ENCODE measurements at regions of chr17 and their contacts with region 1.

Region 1: DNA sequence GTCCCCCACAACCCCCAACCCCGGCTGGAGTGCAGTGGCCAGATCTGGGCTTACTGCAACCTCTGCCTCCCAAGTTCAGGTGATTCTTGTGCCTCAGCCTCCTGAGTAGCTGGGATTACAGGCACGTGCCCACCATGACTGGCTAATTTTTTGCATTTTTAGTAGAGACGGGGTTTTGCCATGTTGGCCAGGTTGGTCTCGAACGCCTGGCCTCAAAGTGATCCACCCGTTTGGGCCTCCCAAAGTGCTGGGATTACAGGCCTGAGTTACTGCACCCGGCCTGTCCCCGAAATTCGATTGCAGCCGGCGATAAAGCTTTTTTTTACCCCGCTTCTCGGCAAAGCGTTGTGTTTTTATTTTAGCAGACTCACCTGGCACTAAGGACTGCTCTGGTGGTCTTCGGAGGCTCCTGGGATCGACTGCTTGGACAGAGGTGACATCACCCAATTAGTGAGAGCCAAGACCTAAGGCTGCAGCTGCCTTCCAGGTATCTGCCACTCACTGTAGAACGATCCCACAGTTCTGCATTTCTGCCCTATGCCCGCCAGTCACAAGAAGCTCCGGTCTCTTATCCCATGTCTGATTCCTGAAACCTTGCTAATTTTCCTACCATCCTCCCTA is 82.2 kb upstream of the ARL4D start:
- DNase-seq: peak in 3 of 5 donors; percentile 20 to 53 (median 20)
- H3K4me3 ChIP-seq: no peak overlapping the region
- H3K4me3 Mint-ChIP-seq: peak overlapping the region in 6 of 8 donors; percentile 5 to 62 (median 44)
- H3K27ac ChIP-seq: no peak overlapping the region
- H3K27ac Mint-ChIP-seq: peak overlapping the region in 2 of 7 donors; percentile 65 to 79
- H3K4me1 ChIP-seq: no peaks in the 10 kb centered on the region
- H3K4me1 Mint-ChIP-seq: peaks cover 5 to 17% (median 11%) of the 10 kb centered on the region in 4 donors
- H3K27me3 ChIP-seq: no peaks in the 10 kb centered on the region
- H3K27me3 Mint-ChIP-seq: no peaks in the 10 kb centered on the region

Region 2: GRCh38 chr17:42872251-42872965 is 444.2 kb before region 1 on chr17:
- CTCF ChIA-PET with region 1: no interaction called
- POLR2A ChIA-PET with region 1: no interaction called
- intact Hi-C with region 1: no loop called
- DNase-seq: no peak
- H3K4me3 ChIP-seq: no peak overlapping the region
- H3K4me3 Mint-ChIP-seq: no peak overlapping the region
- H3K27ac ChIP-seq: no peak overlapping the region
- H3K27ac Mint-ChIP-seq: no peak overlapping the region
- H3K4me1 ChIP-seq: no peaks in the 10 kb centered on the region
- H3K4me1 Mint-ChIP-seq: no peaks in the 10 kb centered on the region
- H3K27me3 ChIP-seq: no peaks in the 10 kb centered on the region
- H3K27me3 Mint-ChIP-seq: peaks cover 14 to 19% of the 10 kb centered on the region in 2 donors

Region 3: DNA sequence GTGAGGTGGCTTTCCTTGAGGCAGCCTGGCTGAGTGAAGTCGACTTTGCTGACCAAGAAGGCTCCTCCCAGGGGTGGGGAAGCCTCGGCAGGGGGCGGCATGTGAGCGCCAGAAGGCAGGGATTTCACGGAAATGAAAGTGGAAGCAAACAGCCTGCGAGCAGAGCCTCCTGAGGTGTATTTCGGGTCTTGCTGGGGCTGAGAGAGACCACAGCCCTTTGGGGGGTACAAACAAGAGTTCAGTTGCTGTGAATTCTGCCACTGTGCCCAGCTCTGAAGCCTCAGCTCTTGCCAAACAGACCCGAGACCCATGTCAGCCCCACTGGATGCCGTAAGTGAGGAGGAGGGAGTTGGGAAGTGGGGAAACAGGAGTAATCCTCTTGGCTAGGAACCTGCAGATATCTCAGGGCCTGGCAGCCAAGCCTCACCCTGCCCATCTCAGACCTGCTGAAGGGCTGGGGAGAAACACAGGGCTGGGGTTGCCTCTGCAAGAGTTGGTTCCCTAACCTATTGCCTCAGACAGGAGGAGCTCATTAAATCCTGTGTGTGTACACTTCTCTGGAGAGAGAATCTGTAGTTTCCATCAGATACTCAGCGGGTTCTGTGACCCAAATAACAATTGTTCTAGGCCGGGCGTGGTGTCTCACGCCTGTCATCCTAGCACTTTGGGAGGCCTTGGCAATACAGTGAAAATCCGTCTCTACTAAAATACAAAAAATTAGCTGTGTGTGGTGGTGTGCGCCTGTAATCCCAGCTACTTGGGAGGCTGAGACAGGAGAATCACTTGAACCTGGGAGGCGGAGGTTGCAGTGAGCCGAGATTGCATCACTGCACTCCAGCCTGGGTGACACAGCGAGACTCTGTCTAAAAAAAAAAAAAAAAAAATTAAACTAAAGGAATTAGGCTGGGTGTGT is 309.7 kb before region 1 on chr17 and contains the start of gene IFI35:
- CTCF ChIA-PET with region 1: interaction called, 7 read pairs
- POLR2A ChIA-PET with region 1: interaction called, 18 read pairs
- intact Hi-C with region 1: no loop called
- DNase-seq: peak; percentile 81 to 89 (median 83)
- H3K4me3 ChIP-seq: peak within 1 kb of the TSS; percentile 94 to 95
- H3K4me3 Mint-ChIP-seq: peak within 1 kb of the TSS; percentile 100
- H3K27ac ChIP-seq: peak within 1 kb of the TSS; percentile 90
- H3K27ac Mint-ChIP-seq: peak within 1 kb of the TSS; percentile 96 to 100 (median 99)
- H3K4me1 ChIP-seq: peaks cover 21% of the 10 kb centered on the region
- H3K4me1 Mint-ChIP-seq: peaks cover 8 to 26% (median 17%) of the 10 kb centered on the region in 4 donors
- H3K27me3 ChIP-seq: no peaks in the 10 kb centered on the region
- H3K27me3 Mint-ChIP-seq: no peaks in the 10 kb centered on the region
- total RNA-seq, gene IFI35: 33.1 to 40.3 TPM

Region 4: GRCh38 chr17:43211480-43212402 is 104.9 kb before region 1 on chr17 and contains the start of gene TMEM106A:
- CTCF ChIA-PET with region 1: interaction called, 11 read pairs
- POLR2A ChIA-PET with region 1: interaction called, 128 read pairs
- intact Hi-C with region 1: no loop called
- DNase-seq: peak; percentile 72 to 76 (median 74)
- H3K4me3 ChIP-seq: peak within 1 kb of the TSS; percentile 82 to 86
- H3K4me3 Mint-ChIP-seq: peak within 1 kb of the TSS; percentile 92 to 100 (median 99)
- H3K27ac ChIP-seq: peak within 1 kb of the TSS; percentile 87
- H3K27ac Mint-ChIP-seq: peak within 1 kb of the TSS; percentile 84 to 99 (median 98)
- H3K4me1 ChIP-seq: peaks cover 22% of the 10 kb centered on the region
- H3K4me1 Mint-ChIP-seq: peaks cover 17 to 43% (median 28%) of the 10 kb centered on the region in 4 donors
- H3K27me3 ChIP-seq: no peaks in the 10 kb centered on the region
- H3K27me3 Mint-ChIP-seq: no peaks in the 10 kb centered on the region
- total RNA-seq, gene TMEM106A: 12.5 to 12.8 TPM

Region 5: DNA sequence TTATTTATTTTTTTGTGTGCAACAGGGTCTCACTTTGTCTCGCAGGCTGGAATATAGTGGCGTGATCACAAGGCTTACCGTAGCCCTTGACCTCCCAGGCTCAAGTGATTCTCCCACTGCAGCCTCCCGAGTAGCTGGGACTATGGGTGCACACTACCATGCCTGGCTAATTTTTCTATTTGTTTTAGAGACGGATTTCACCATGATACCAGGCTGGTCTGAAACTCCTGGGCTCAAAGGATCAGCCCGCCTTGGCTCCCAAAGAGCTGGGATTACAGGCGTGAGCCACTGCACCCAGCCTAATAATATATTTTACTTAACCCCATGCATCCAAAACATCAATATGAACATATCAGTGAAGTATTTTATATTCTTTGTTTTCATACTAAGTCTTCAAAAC is 90.2 kb before region 1 on chr17:
- CTCF ChIA-PET with region 1: no interaction called
- POLR2A ChIA-PET with region 1: interaction called, 10 read pairs
- intact Hi-C with region 1: no loop called
- DNase-seq: no peak
- H3K4me3 ChIP-seq: no peak overlapping the region
- H3K4me3 Mint-ChIP-seq: no peak overlapping the region
- H3K27ac ChIP-seq: no peak overlapping the region
- H3K27ac Mint-ChIP-seq: no peak overlapping the region
- H3K4me1 ChIP-seq: no peaks in the 10 kb centered on the region
- H3K4me1 Mint-ChIP-seq: no peaks in the 10 kb centered on the region
- H3K27me3 ChIP-seq: no peaks in the 10 kb centered on the region
- H3K27me3 Mint-ChIP-seq: no peaks in the 10 kb centered on the region

Region 6: GRCh38 chr17:43367737-43368242 is 51.2 kb after region 1 on chr17:
- CTCF ChIA-PET with region 1: interaction called, 3 read pairs
- POLR2A ChIA-PET with region 1: interaction called, 207 read pairs
- intact Hi-C with region 1: loop called (anchors 2 kb)
- DNase-seq: peak in 2 of 5 donors; percentile 60 to 87
- H3K4me3 ChIP-seq: peak overlapping the region; percentile 1 to 76
- H3K4me3 Mint-ChIP-seq: peak overlapping the region; percentile 91 to 98 (median 95)
- H3K27ac ChIP-seq: peak overlapping the region; percentile 91
- H3K27ac Mint-ChIP-seq: peak overlapping the region; percentile 99 to 100 (median 100)
- H3K4me1 ChIP-seq: peaks cover 22% of the 10 kb centered on the region
- H3K4me1 Mint-ChIP-seq: peaks cover 13 to 50% (median 35%) of the 10 kb centered on the region in 4 donors
- H3K27me3 ChIP-seq: no peaks in the 10 kb centered on the region
- H3K27me3 Mint-ChIP-seq: no peaks in the 10 kb centered on the region

Region 7: DNA sequence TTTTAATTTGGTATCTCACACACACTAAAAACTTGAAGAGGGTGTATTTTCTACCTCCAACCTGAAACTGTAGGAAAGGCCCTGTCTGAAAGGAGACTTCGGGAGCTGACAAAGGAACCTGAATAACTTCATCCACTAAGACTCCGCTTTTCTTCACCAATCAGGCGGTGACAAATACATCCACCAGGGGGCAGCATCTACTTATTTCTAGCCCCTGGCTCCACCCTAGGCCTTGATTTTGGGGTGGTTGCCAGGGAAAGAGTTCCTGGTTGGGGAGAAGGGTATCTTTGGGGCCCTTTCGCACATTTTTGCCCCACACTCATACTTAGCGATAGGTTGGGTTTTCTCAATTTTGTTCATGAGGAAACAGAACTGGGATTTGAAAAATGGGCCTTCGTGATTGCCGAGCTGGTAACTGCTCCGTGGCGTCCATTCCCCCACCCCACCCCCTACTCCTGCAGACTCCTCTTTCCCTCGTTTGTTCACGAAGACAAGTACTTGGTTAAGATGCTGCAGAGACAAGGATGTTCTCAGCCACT is 77.4 kb after region 1 on chr17:
- CTCF ChIA-PET with region 1: no interaction called
- POLR2A ChIA-PET with region 1: interaction called, 25 read pairs
- intact Hi-C with region 1: no loop called
- DNase-seq: peak; percentile 82 to 89 (median 86)
- H3K4me3 ChIP-seq: peak overlapping the region in 1 of 2 donors; percentile 30
- H3K4me3 Mint-ChIP-seq: peak overlapping the region in 4 of 8 donors; percentile 8 to 46 (median 30)
- H3K27ac ChIP-seq: no peak overlapping the region
- H3K27ac Mint-ChIP-seq: peak overlapping the region; percentile 27 to 73 (median 62)
- H3K4me1 ChIP-seq: peaks cover 41% of the 10 kb centered on the region
- H3K4me1 Mint-ChIP-seq: peaks cover 19 to 56% (median 35%) of the 10 kb centered on the region in 4 donors
- H3K27me3 ChIP-seq: no peaks in the 10 kb centered on the region
- H3K27me3 Mint-ChIP-seq: no peaks in the 10 kb centered on the region